Activated T-helper 2 cell treated with anti-CD3 and anti-CD28 coated beads, Interferon-gamma antibody, Interleukin-2, Interleukin-4, amounts not matched to agents 10 μg/mL and 5 μg/mL and 100 μg/mL, durations not matched to agents 14 hours and 24 hours and 36 hours (primary cell): ENCODE measurements at regions of chr4 and their contacts with region 1.

Region 1: DNA sequence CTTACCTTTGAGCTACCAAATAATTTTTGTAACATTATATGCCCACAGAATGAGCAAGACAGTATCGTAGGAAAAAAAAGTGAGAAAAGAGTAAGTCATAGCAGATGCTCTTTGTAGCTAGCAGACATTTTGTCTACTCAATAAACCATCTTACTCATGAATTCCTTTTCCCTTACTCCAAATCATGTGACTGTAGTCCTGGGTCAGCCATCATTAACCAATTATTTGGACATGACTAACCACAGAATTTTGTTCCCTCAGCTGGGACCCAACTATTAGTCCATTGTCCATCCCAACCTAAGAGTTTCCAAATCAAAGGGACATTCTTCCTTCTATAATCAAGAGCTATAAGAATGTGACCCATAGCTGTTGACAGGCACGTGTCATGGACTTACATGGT is 11.4 kb downstream of the UBE2D3 start:
- DNase-seq: no peak
- H3K4me3 Mint-ChIP-seq: no peak overlapping the region
- H3K27ac Mint-ChIP-seq: peak overlapping the region; percentile 76
- H3K4me1 Mint-ChIP-seq: peaks cover 77% of the 10 kb centered on the region
- H3K27me3 Mint-ChIP-seq: no peaks in the 10 kb centered on the region

Region 2: GRCh38 chr4:102696758-102697157 is 119.2 kb before region 1 on chr4:
- intact Hi-C with region 1: no loop called
- DNase-seq: no peak
- H3K4me3 Mint-ChIP-seq: no peak overlapping the region
- H3K27ac Mint-ChIP-seq: no peak overlapping the region
- H3K4me1 Mint-ChIP-seq: peaks cover 2% of the 10 kb centered on the region
- H3K27me3 Mint-ChIP-seq: no peaks in the 10 kb centered on the region

Region 3: GRCh38 chr4:102794999-102795398 is 21.0 kb before region 1 on chr4:
- intact Hi-C with region 1: loop called (anchors 2 kb)
- DNase-seq: no peak
- H3K4me3 Mint-ChIP-seq: no peak overlapping the region
- H3K27ac Mint-ChIP-seq: no peak overlapping the region
- H3K4me1 Mint-ChIP-seq: peaks cover 20% of the 10 kb centered on the region
- H3K27me3 Mint-ChIP-seq: no peaks in the 10 kb centered on the region